Activated naive CD4-positive, alpha-beta T cell treated with anti-CD3 and anti-CD28 coated beads, Interleukin-2, amount 10 ng/mL, durations not matched to agents 7 days and 5 days (primary cell): ENCODE measurements at regions of chr5 and their contacts with region 1.

Region 1: DNA sequence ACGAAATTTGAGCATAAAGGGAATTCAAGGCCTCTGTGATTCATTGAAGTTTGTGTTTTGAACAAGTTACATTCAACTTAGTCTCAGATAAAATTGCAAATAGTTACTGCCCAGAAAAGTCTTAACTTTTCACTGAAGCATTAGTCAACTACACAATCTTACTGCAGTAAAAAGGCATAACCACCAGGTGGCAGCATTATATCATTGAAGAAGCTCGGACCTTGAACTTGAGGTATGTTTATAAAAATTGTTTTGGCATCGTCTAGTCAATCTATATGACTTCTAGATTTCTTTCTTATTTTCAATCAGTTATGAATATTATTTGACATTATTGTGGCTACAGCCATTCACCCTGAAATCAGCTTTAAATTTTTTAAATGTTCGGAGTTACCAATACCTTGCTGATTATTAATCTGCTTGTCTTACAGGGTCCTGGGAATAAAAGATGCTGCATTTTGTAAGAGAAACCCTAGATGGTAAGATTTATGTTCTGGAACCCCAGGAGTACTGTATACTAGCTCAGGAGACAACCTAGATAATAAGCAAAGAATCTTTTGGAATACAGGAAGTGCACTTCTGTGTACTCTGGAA is 83.9 kb upstream of the GRAMD2B start:
- DNase-seq: peak; percentile 63
- H3K4me3 Mint-ChIP-seq: no peak overlapping the region
- H3K27ac Mint-ChIP-seq: no peak overlapping the region
- H3K4me1 Mint-ChIP-seq: no peaks in the 10 kb centered on the region
- H3K27me3 Mint-ChIP-seq: peaks cover 16% of the 10 kb centered on the region

Region 2: DNA sequence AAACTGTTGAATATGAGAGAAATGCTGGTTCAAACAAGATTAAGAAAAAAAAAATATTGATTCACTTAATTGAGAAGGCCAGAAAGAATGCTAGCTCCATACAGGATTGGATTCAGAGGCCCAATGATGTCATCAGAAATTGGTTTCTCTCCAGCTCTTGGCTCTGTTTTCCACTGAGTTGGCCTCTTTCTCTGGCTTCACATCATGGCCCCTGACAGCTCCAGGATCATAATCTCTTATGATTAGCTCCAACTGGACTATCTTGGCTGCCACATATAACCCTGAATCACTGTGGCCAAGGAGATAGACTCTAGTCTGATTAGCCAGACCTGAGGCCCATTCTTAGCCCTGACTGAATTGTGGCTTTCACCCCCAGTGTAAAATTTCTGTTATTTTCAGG is 160.8 kb before region 1 on chr5:
- CTCF ChIA-PET with region 1: no interaction called
- DNase-seq: no peak
- H3K4me3 Mint-ChIP-seq: no peak overlapping the region
- H3K27ac Mint-ChIP-seq: no peak overlapping the region
- H3K4me1 Mint-ChIP-seq: no peaks in the 10 kb centered on the region
- H3K27me3 Mint-ChIP-seq: no peaks in the 10 kb centered on the region

Region 3: GRCh38 chr5:126373375-126374108 is 34.2 kb after region 1 on chr5:
- CTCF ChIA-PET with region 1: no interaction called
- DNase-seq: no peak
- H3K4me3 Mint-ChIP-seq: no peak overlapping the region
- H3K27ac Mint-ChIP-seq: no peak overlapping the region
- H3K4me1 Mint-ChIP-seq: peaks cover 9% of the 10 kb centered on the region
- H3K27me3 Mint-ChIP-seq: no peaks in the 10 kb centered on the region

Region 4: DNA sequence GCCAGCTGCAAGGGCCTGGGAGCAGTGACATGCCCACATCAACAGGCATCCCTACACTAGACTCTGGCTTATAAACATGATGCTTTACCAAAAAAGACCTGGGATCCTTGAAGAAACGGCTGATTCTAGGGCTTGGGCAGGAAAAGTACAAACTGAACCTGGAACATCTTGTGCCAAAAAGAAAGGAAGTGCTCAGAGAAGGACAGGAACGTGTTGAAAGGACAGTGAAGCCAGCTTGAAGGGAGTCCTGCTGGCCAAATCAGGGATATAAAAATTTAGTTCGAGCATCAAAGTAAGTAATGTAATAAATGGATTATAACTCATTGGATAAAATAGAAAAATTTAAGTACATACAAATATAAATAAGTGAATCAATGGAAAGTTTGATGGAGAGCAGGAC is 197.6 kb after region 1 on chr5:
- CTCF ChIA-PET with region 1: interaction called, 125 read pairs
- DNase-seq: no peak
- H3K4me3 Mint-ChIP-seq: no peak overlapping the region
- H3K27ac Mint-ChIP-seq: no peak overlapping the region
- H3K4me1 Mint-ChIP-seq: no peaks in the 10 kb centered on the region
- H3K27me3 Mint-ChIP-seq: peaks cover 5% of the 10 kb centered on the region

Region 5: DNA sequence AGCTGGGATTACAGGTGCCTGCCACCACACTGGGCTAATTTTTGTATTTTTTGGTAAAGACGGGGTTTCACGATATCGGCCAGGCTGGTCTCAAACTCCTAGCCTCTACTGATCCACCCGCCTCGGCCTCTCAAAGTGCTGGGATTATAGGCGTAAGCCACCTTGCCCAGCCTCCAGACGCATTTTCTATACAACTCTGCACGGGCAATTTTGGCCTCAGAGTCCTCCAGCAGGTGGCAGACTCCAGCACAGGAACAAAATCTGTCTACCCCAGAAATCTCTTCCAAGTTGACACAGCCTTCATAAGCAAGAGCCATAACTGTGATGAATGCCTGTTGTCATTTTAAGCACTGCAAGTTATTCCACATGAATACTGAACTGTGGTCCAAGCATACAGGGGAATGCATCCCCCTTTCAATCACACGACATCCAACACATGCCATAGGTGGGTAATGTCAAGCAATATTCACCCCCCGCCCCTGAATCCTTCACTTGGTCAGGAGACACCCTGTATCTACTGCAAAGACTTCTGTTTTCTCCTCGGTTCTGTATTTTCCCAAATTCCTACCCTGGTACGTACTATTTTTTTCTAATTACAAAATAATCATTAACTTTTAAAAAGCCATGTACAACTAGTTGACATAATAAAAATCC is 204.9 kb after region 1 on chr5:
- CTCF ChIA-PET with region 1: interaction called, 125 read pairs
- DNase-seq: peak; percentile 58
- H3K4me3 Mint-ChIP-seq: no peak overlapping the region
- H3K27ac Mint-ChIP-seq: no peak overlapping the region
- H3K4me1 Mint-ChIP-seq: no peaks in the 10 kb centered on the region
- H3K27me3 Mint-ChIP-seq: peaks cover 3% of the 10 kb centered on the region

Region 6: GRCh38 chr5:126624534-126624933 is 285.2 kb after region 1 on chr5:
- CTCF ChIA-PET with region 1: no interaction called
- DNase-seq: no peak
- H3K4me3 Mint-ChIP-seq: no peak overlapping the region
- H3K27ac Mint-ChIP-seq: no peak overlapping the region
- H3K4me1 Mint-ChIP-seq: peaks cover 8% of the 10 kb centered on the region
- H3K27me3 Mint-ChIP-seq: no peaks in the 10 kb centered on the region